A549 (cell line): ENCODE measurements at regions of chr15 and their contacts with region 1.

Region 1: DNA sequence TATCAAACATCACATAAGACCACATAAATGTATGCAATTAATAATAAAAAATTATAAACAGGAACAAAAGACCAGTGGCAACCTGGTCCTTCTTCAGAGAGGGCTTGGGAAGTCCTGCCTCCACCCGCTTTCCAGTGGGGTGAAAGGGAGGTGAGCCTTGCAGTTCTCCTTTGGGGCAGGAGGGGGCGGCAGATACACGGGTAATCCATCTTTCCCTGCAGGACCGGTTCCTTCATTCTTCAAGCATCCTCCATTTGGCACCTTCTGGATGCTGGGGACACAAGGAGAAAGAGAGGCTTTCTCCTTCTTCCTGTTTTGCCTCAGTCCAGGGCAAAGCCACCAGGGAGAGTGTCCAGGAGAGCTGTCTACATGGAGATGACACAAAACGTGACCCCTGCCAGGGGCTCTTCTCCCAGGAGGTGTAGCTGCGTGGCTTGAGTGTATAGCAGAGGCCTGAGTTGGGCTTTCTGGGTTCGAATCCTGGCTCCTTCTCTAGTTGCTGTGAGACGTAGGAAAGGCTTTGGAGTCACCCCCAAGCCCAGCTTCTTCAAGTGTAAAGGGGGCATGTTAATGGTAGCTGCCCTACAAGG is 23.2 kb downstream of the RPLP1 start:
- DNase-seq: peak; percentile 83 to 97
- ATAC-seq: peak; percentile 85 to 92
- H3K4me3 ChIP-seq: no peak overlapping the region
- H3K27ac ChIP-seq: no peak overlapping the region
- H3K4me1 ChIP-seq: no peaks in the 10 kb centered on the region
- CTCF ChIP-seq: peak; percentile 95
- EP300 ChIP-seq: no peak
- POLR2A ChIP-seq: no peak
- RAD21 ChIP-seq: peak; percentile 98 to 99

Region 2: DNA sequence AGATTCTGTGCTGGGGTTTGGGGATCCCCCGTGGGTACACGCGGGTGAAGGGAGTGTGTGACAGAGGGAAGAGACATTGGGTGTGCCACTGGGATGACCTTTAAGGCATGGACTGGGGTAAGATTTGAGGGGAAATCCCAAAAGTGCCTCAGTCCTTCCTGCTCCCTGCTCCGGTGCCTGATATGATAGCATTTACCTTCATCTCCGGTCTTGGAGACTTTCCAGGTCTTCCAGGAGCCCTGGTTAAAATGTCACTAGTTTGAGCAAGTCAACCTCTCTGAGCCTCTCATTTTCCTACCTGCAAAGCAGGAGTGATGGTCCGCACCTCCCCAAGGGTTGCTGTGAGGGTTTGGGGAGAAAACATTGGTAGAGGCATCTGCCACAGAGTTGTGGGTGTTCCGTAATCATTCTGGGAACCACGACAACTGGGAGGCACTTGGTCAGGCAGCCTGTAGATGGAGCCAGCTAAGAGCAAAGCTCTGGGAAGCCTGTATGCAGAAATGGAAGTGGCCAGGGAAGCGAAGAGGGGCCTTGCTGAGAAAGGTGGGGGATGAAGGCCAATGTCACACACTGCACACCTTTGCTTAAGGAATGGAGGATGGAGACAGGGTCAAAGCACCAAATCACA is 95.7 kb before region 1 on chr15:
- CTCF ChIA-PET with region 1: no interaction called
- POLR2A ChIA-PET with region 1: no interaction called
- DNase-seq: peak in 1 of 2 experiments; percentile 41
- ATAC-seq: peak; percentile 52 to 83; a peak in 4 of 6 replicates
- H3K4me3 ChIP-seq: no peak overlapping the region
- H3K27ac ChIP-seq: no peak overlapping the region
- H3K4me1 ChIP-seq: peaks cover 9% of the 10 kb centered on the region
- CTCF ChIP-seq: peak; percentile 17; the same call in 1 of the 3 replicates
- EP300 ChIP-seq: no peak
- POLR2A ChIP-seq: no peak
- RAD21 ChIP-seq: no peak; a peak in 1 of 5 replicates

Region 3: DNA sequence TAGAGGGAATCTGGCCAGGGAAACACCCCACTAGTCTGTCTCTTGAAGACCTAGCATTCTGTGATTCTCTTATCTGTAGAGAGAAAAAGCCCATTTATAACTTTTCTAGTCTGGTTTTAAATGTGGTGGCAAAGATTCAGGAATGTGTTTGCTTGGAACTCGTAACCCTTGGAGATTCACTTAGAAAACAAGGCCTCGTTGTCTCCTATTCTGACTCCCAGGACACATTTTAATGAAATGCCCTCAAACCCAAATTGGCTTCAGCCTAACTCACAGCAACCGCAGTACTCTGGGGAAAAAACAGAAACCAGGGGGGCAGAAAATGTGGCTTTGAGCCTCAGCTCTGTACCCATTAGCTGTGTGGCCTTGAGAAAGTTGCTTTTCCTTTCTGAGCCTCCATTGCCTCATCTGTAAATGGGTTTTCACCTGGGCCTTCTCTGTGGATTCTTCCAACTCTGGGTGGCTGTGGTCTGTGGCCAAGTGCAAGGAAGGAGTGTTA is 13.3 kb after region 1 on chr15:
- CTCF ChIA-PET with region 1: interaction called, 73 read pairs
- POLR2A ChIA-PET with region 1: no interaction called
- DNase-seq: no peak
- ATAC-seq: no peak
- H3K4me3 ChIP-seq: no peak overlapping the region
- H3K27ac ChIP-seq: no peak overlapping the region
- H3K4me1 ChIP-seq: no peaks in the 10 kb centered on the region
- CTCF ChIP-seq: no peak
- EP300 ChIP-seq: no peak
- POLR2A ChIP-seq: no peak
- RAD21 ChIP-seq: no peak

Region 4: DNA sequence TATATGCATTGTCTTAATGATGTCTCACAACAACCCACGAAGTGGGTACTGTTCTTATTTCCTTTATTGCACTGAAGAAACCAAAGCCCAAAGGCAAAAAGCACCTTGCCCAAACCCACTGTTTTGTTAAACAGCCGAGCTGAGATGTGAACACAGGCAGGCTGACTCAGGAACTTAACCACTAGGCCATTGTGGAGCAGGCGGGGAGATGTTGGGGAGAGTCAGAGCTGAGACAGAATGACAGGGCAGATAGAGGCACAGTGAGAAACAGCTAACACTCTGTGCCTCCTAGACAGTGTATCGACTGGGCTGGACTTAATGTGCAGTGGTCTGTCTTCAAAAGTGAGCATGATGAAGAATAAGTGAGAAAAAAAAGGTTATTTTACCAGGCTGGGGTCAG is 33.3 kb after region 1 on chr15:
- CTCF ChIA-PET with region 1: interaction called, 19 read pairs
- POLR2A ChIA-PET with region 1: no interaction called
- DNase-seq: no peak
- ATAC-seq: no peak
- H3K4me3 ChIP-seq: no peak overlapping the region
- H3K27ac ChIP-seq: no peak overlapping the region
- H3K4me1 ChIP-seq: peaks cover 10% of the 10 kb centered on the region
- CTCF ChIP-seq: no peak
- EP300 ChIP-seq: no peak
- POLR2A ChIP-seq: no peak
- RAD21 ChIP-seq: no peak

Region 5: DNA sequence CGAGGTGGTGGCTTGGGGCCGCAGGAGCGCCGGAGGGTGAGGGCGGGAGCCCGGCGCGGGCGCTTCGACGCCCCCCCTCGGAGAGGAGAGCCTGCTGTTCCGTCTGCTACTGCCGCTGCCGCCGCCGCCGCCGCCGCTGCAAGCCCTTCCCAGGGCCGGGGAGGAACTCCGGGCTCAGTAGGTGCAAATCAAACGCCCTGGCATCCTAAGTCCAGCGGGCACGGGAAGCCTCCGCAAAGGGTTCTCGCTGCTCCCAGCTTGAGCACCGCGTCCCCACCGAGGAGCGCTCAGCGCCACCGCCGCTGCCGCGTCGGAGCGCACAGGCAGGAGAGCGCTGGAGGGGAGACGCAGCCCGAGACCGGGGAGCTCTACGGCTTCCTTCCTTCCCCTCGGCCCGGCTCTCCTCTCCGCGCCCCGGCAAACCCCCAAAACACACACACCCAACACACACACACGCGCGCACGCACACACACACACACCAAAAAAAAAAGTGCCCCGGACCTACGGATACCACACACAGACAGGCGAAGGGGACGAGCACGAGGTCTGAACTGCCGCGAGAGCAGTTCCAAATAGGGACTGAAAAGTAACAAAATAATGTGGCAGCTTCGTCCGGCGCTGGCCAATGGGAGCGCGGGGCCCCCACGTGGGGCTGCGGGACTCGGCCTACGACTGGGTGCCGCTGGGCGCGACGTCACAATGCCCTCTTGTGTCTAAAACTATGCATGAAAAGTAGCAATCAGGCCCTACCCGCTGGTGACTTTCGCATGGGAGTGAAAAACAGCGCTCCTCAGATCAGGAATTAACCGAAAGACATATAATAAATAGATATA is 621.7 kb after region 1 on chr15 and contains the start of gene TLE3:
- CTCF ChIA-PET with region 1: interaction called, 17 read pairs
- POLR2A ChIA-PET with region 1: no interaction called
- DNase-seq: peak; percentile 98 to 100
- ATAC-seq: peak; percentile 64 to 80
- H3K4me3 ChIP-seq: peak within 1 kb of the TSS; percentile 72
- H3K27ac ChIP-seq: peak within 1 kb of the TSS; percentile 87 to 91
- H3K4me1 ChIP-seq: peaks cover 46% of the 10 kb centered on the region
- CTCF ChIP-seq: peak; percentile 47
- EP300 ChIP-seq: no peak
- POLR2A ChIP-seq: peak; percentile 83
- RAD21 ChIP-seq: peak; percentile 61 to 77
- polyA plus RNA-seq, gene TLE3: 4.6 and 6.6 TPM in 2 replicates

Region 6: DNA sequence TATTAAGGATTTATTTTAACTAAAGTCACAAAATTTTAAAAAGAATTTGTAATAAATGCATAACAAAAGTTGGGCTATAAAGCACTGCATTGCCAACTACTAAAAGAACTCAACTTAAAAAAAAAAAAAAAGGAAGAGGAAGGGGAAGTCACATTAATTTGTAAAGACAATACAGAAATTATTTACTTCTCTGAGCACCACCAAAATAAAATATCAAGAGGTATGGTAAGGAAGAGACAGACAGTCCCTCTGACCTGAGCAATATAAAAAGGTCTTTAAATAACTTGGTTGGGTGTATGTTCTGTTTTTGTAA is 1204.0 kb after region 1 on chr15:
- CTCF ChIA-PET with region 1: interaction called, 13 read pairs
- POLR2A ChIA-PET with region 1: no interaction called
- DNase-seq: no peak
- ATAC-seq: no peak
- H3K4me3 ChIP-seq: no peak overlapping the region
- H3K27ac ChIP-seq: no peak overlapping the region
- H3K4me1 ChIP-seq: no peaks in the 10 kb centered on the region
- CTCF ChIP-seq: no peak
- EP300 ChIP-seq: no peak
- POLR2A ChIP-seq: no peak
- RAD21 ChIP-seq: no peak